Transverse colon (tissue), 4 donors: ENCODE measurements at regions of chrX and their contacts with region 1.

Region 1: GRCh38 chrX:124211312-124211942 is 121.0 kb upstream of the TEX13D start:
- DNase-seq: no peak
- H3K4me3 ChIP-seq: no peak overlapping the region
- H3K27ac ChIP-seq: no peak overlapping the region
- H3K4me1 ChIP-seq: no peaks in the 10 kb centered on the region
- H3K27me3 ChIP-seq: no peaks in the 10 kb centered on the region
- CTCF ChIP-seq: peak in 4 of 5 experiments; percentile 13 to 46 (median 39)
- EP300 ChIP-seq: no peak
- POLR2A ChIP-seq: no peak

Region 2: DNA sequence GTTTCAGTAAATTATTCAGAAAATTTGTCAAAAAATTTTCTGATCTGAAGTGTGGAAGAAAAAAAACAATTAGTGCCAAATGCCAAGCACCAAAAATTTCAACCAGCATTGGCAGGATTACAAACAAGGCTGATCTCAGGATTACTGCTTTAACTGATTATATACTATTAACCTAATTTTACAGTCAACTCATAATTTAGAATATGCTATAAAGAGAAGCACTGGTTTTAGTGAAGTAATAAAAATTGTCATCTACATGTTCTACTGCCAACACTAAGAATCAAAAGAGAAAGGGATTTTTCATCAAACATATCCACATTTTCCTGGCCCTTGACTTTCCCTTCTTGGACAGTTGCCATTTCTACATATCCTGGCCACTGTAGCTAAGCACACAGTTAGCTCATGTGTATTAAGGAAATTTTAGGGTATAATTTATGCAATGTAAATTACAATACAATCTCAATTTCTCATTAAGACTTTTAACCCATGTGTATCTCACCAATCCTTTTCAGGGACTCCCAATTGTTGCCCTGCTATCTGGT is 512.4 kb before region 1 on chrX:
- in situ Hi-C with region 1: no loop called
- intact Hi-C with region 1: no loop called
- DNase-seq: no peak
- H3K4me3 ChIP-seq: no peak overlapping the region
- H3K27ac ChIP-seq: no peak overlapping the region
- H3K4me1 ChIP-seq: peaks cover 0 to 7% (median 0%) of the 10 kb centered on the region in 4 donors
- H3K27me3 ChIP-seq: no peaks in the 10 kb centered on the region
- CTCF ChIP-seq: no peak
- EP300 ChIP-seq: no peak
- POLR2A ChIP-seq: no peak

Region 3: DNA sequence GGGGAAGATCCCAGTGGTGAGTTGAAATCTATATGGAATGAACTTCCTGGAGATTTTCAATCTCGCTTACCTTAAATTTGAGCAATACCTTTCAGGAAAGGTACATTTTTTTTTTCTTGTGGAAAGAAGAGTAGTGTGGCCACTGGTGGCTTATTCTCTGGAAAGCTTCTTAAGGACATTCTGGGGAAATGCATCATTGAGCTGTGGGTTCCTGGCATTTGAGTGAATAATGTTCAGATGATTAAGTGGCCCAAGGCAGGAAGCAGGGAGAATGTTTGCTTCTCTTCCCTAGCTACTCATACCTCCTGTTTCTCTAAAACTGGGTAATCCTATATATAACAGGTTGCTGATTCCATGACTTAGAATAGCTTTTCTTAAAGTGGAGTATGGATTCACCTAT is 218.1 kb before region 1 on chrX:
- in situ Hi-C with region 1: no loop called
- intact Hi-C with region 1: no loop called
- DNase-seq: no peak
- H3K4me3 ChIP-seq: no peak overlapping the region
- H3K27ac ChIP-seq: no peak overlapping the region
- H3K4me1 ChIP-seq: peaks cover 0 to 26% (median 4%) of the 10 kb centered on the region in 4 donors
- H3K27me3 ChIP-seq: no peaks in the 10 kb centered on the region
- CTCF ChIP-seq: no peak
- EP300 ChIP-seq: no peak
- POLR2A ChIP-seq: no peak

Region 4: GRCh38 chrX:124388562-124388961 is 177.1 kb after region 1 on chrX:
- in situ Hi-C with region 1: loop called in 1 of 4 experiments (anchors 25 kb)
- intact Hi-C with region 1: no loop called
- DNase-seq: peak; percentile 49
- H3K4me3 ChIP-seq: no peak overlapping the region
- H3K27ac ChIP-seq: no peak overlapping the region
- H3K4me1 ChIP-seq: no peaks in the 10 kb centered on the region
- H3K27me3 ChIP-seq: no peaks in the 10 kb centered on the region
- CTCF ChIP-seq: peak in 4 of 5 experiments; percentile 35 to 81 (median 58)
- EP300 ChIP-seq: no peak
- POLR2A ChIP-seq: no peak